PC-9 (cell line): ENCODE measurements at regions of chr12 and their contacts with region 1.

Region 1: DNA sequence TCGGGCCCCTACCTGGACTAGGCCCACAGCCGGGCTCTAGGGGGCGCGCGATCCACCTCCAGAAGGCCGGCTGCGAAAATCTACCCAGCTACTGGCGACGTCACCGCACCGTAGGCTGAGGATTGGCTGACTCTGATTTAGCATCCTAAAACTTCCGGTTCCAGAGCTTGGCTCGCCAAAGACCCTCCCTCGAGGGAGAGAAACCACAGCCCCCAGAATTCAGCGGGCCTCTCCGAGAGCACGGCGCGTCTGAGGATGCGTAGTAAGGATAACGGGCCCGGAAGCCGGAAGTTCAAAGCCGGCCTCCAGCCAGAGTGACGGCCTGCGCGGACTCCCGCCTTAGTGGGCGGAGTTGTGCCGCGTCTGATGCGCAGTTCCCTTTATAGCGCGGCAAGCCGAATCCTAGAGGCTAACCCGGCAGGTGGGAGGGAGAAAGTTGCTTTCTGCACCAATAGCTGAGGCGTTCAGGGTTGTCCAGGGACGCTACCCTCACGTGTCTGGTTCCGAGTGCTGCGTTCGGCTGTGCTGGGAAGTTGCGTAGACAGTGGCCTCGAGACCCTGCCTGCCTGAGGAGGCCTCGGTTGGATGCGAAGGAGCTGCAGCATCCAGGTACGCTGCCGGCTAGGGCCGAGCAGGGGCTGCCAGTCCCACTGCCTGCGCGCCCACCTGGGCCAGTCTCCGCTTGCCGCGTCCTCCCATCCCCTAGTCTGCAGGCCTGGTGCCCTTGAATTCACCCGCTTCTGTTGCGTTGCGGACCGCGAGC is at the start of gene COX14:
- DNase-seq: peak; percentile 98
- H3K4me3 ChIP-seq: peak within 1 kb of the TSS; percentile 74
- H3K27ac ChIP-seq: peak within 1 kb of the TSS; percentile 80
- H3K4me1 ChIP-seq: peaks cover 43% of the 10 kb centered on the region
- H3K27me3 ChIP-seq: no peaks in the 10 kb centered on the region
- CTCF ChIP-seq: peak; percentile 86; the same call in 1 of the 2 replicates
- total RNA-seq, gene COX14: 53.9 and 76.1 TPM in 2 replicates

Region 2: DNA sequence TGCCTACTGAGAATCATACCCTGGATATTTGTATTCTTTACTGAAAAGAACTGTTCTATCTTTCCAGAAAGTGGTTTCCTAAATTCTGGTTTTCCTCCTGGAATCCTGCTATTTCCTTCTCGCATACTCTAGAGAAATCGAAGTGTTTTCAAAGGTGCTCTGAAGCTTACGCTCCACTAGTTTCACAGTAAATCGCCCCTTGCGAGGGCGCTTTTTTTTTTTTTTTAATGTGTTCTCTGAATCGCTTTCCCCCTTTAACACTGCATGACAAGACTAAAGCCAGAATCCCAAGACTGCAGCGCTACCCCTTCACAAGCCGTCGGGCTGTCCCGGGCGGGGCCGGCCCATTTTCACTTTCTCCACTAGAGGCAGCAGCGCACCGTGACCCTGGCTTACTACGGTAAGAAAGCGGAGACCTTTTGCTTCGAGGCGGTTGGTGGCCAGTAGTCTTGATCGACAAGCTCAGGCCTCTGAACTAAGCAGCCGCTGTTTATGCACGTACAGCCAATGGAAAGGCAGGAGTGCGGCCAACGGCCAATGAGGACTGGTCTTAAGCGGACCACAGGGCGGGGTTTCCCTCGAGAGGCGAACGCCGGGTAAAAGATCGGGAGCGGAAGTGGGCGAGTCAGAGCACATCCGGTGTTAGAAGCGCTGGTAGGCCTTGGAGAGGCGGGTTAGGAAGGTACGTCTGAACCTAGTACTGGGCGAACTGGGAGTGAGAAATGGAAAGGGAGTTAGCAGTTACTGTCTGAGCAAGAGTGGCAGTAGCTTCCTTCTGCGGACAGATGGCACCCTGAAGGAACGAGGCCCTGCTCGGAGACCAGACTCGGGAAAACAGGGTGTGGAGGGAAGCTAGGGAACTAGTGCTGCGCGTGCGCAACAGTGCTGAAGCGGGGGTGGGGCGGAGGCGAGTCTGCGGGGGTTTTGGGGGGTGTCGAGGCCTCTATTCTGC is 370.7 kb before region 1 on chr12 and contains the start of gene TMBIM6:
- CTCF ChIA-PET with region 1: interaction called, 20 read pairs
- POLR2A ChIA-PET with region 1: interaction called, 10 read pairs
- intact Hi-C with region 1: no loop called
- DNase-seq: peak; percentile 98 to 99
- H3K4me3 ChIP-seq: peak within 1 kb of the TSS; percentile 96
- H3K27ac ChIP-seq: peak within 1 kb of the TSS; percentile 87
- H3K4me1 ChIP-seq: peaks cover 20% of the 10 kb centered on the region
- H3K27me3 ChIP-seq: no peaks in the 10 kb centered on the region
- CTCF ChIP-seq: peak; percentile 92
- total RNA-seq, gene TMBIM6: 685 and 690 TPM in 2 replicates

Region 3: DNA sequence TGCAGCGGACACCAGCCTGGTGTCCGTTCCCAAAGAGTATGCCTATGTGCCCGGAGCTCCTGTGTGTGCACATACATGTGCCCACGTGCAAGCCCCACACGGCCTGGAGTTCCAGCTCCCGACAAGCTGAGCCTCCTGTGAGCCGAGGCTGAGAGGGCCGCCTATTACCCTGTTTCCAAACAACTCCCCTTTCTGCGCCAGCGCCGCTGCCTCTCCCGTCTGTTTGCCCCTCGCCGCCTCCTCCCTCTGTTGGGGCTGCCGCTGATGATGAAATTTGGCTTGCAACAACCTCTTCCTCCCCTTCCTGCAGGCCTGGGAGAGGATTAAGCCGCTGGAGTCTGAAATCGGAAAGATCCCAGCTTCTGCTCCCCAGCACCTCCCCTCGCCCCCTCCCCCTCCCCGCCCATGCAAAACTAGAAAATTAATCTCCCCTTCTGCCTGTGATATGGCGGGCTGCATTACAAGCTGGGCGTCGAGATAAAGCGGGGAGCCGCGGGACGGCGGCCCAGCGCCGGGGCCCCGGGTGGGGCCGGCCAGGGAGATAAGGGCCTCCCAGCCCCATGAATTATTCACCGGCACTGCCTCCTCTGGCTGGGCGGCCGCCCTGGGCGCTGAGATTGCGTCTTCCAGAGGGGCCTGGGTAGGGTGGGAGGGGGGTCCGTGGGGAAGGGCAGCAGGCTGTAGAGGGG is 61.3 kb before region 1 on chr12:
- CTCF ChIA-PET with region 1: no interaction called
- POLR2A ChIA-PET with region 1: no interaction called
- intact Hi-C with region 1: no loop called
- DNase-seq: no peak
- H3K4me3 ChIP-seq: no peak overlapping the region
- H3K27ac ChIP-seq: no peak overlapping the region
- H3K4me1 ChIP-seq: no peaks in the 10 kb centered on the region
- H3K27me3 ChIP-seq: peaks cover 12% of the 10 kb centered on the region
- CTCF ChIP-seq: no peak

Region 4: GRCh38 chr12:50156641-50157040 is 44.8 kb after region 1 on chr12:
- CTCF ChIA-PET with region 1: no interaction called
- POLR2A ChIA-PET with region 1: interaction called, 17 read pairs
- intact Hi-C with region 1: no loop called
- DNase-seq: no peak
- H3K4me3 ChIP-seq: no peak overlapping the region
- H3K27ac ChIP-seq: no peak overlapping the region
- H3K4me1 ChIP-seq: no peaks in the 10 kb centered on the region
- H3K27me3 ChIP-seq: no peaks in the 10 kb centered on the region
- CTCF ChIP-seq: no peak

Region 5: DNA sequence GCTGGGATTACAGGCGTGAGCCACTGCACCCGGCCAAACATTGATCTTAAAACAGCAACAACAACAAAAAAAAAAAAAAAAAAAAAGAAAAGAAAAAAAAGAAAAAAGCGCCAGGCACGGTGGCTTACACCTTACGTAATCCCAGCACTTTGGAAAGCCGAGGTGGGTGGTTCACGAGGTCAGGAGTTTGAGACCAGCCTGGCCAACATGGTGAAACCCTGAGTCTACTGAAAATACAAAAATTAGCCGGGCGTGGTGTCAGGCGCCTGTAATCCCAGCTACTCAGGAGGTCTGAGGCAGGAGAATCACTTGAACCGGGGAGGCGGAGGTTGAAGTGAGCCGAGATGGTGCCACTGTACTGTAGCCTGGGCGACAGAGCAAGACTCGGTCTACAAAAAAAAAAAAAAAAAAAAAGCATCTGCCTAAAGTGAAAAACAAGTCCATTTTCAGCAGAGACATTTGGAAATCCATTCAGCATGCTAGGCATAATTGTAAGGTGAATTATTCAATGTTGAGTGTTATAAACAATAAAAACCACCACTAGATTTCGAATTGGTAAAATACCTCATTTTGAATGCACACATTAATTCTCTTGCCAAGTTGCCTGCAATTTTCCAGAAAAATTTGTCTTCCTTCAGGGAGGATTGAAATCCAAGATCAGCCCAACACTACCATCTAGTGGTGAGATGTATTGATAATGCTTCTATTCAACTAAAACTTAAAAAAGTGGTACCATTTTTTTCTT is 63.3 kb after region 1 on chr12:
- CTCF ChIA-PET with region 1: interaction called, 11 read pairs
- POLR2A ChIA-PET with region 1: no interaction called
- intact Hi-C with region 1: no loop called
- DNase-seq: peak in 1 of 2 experiments; percentile 51
- H3K4me3 ChIP-seq: no peak overlapping the region
- H3K27ac ChIP-seq: no peak overlapping the region
- H3K4me1 ChIP-seq: no peaks in the 10 kb centered on the region
- H3K27me3 ChIP-seq: no peaks in the 10 kb centered on the region
- CTCF ChIP-seq: peak; percentile 78

Region 6: GRCh38 chr12:50257686-50258551 is 146.0 kb after region 1 on chr12:
- CTCF ChIA-PET with region 1: no interaction called
- POLR2A ChIA-PET with region 1: no interaction called
- intact Hi-C with region 1: loop called (anchors 2 kb)
- DNase-seq: no peak
- H3K4me3 ChIP-seq: no peak overlapping the region
- H3K27ac ChIP-seq: peak overlapping the region; percentile 98
- H3K4me1 ChIP-seq: peaks cover 73% of the 10 kb centered on the region
- H3K27me3 ChIP-seq: no peaks in the 10 kb centered on the region
- CTCF ChIP-seq: no peak

Region 7: DNA sequence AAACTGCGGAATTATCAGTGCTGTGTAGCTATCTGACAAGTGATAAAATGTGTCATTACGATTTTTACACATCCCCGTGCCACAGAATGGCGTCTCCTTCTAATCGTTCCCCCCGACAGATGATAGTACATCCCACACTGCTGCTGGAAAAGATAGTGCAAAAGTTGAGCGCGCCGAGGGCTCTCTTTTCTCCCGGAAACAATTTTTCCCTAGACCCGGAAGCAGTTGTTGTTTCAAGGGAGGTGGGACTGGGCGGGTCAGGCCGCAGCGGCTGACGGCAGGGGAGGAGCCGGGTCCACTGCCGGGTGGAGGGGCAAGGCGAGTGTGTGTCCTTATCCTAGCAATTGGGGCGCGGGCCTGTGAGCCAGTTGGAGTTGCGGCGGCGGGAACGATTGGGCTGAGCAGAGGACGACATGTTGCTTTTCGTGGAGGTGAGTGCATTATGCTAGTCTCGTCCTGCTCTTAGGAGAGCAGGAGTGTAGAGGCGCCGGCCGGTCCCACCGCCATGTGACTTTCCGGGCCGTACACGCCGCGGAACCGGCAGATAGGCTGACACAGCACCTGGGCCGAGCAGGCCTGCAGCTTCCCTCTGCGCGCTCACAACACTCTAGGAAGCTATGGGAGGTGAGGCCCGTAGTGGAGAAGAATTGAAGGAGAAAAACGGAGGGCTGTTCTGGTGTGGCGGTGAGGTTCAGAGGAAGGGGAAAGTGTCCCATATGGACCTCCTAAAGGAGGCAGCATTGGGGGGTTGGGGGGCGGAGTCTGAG is 288.9 kb after region 1 on chr12 and contains the start of gene LARP4:
- CTCF ChIA-PET with region 1: no interaction called
- POLR2A ChIA-PET with region 1: interaction called, 20 read pairs
- intact Hi-C with region 1: no loop called
- DNase-seq: peak; percentile 86 to 93
- H3K4me3 ChIP-seq: peak within 1 kb of the TSS; percentile 83
- H3K27ac ChIP-seq: peak within 1 kb of the TSS; percentile 88
- H3K4me1 ChIP-seq: peaks cover 50% of the 10 kb centered on the region
- H3K27me3 ChIP-seq: no peaks in the 10 kb centered on the region
- CTCF ChIP-seq: no peak
- total RNA-seq, gene LARP4: 49.2 and 74.2 TPM in 2 replicates